ENCODE measurements at regions of chr15 and their contacts with region 1.

Region 1: GRCh38 chr15:45166834-45167630 is 20.7 kb downstream of the SHF start:
- DNase-seq: peak; percentile 51
- ATAC-seq: peak; percentile 95
- H3K4me3 ChIP-seq: peak overlapping the region; percentile 79
- H3K27ac ChIP-seq: peak overlapping the region; percentile 40
- H3K4me1 ChIP-seq: peaks cover 12% of the 10 kb centered on the region
- H3K27me3 ChIP-seq: no peaks in the 10 kb centered on the region
- CTCF ChIP-seq: peak; percentile 79 to 87 (median 83); a peak in 5 of 6 replicates
- EP300 ChIP-seq: no peak
- POLR2A ChIP-seq: peak; percentile 75
- RAD21 ChIP-seq: peak; percentile 41

Region 2: GRCh38 chr15:45126535-45127158 is 40.4 kb before region 1 on chr15:
- CTCF ChIA-PET with region 1: interaction called, 14 read pairs
- POLR2A ChIA-PET with region 1: no interaction called
- RAD21 ChIA-PET with region 1: interaction called, 4 read pairs
- SMC1A ChIA-PET with region 1: interaction called, 3 read pairs
- in situ Hi-C with region 1: no loop called
- intact Hi-C with region 1: no loop called
- DNase-seq: no peak
- ATAC-seq: peak; percentile 89
- H3K4me3 ChIP-seq: no peak overlapping the region
- H3K27ac ChIP-seq: no peak overlapping the region
- H3K4me1 ChIP-seq: no peaks in the 10 kb centered on the region
- H3K27me3 ChIP-seq: peaks cover 4 to 8% of the 10 kb centered on the region in 2 experiments
- CTCF ChIP-seq: peak; percentile 64 to 72 (median 67)
- EP300 ChIP-seq: no peak
- POLR2A ChIP-seq: no peak
- RAD21 ChIP-seq: peak; percentile 45

Region 3: GRCh38 chr15:45198337-45199135 is 31.5 kb after region 1 on chr15:
- CTCF ChIA-PET with region 1: interaction called, 253 read pairs
- POLR2A ChIA-PET with region 1: interaction called, 9 read pairs
- RAD21 ChIA-PET with region 1: interaction called, 104 read pairs
- SMC1A ChIA-PET with region 1: interaction called, 159 read pairs
- in situ Hi-C with region 1: no loop called
- intact Hi-C with region 1: loop called (anchors 1 kb)
- DNase-seq: peak; percentile 98
- ATAC-seq: peak; percentile 63
- H3K4me3 ChIP-seq: peak overlapping the region; percentile 86
- H3K27ac ChIP-seq: peak overlapping the region; percentile 95
- H3K4me1 ChIP-seq: no peaks in the 10 kb centered on the region; the same call in none of the 2 replicates
- H3K27me3 ChIP-seq: no peaks in the 10 kb centered on the region
- CTCF ChIP-seq: peak; percentile 71 to 81 (median 80)
- EP300 ChIP-seq: peak in 1 of 2 experiments; percentile 90; a peak in 1 of 4 replicates
- POLR2A ChIP-seq: peak; percentile 96
- RAD21 ChIP-seq: no peak

Region 4: GRCh38 chr15:45279024-45279698 is 112.1 kb after region 1 on chr15:
- CTCF ChIA-PET with region 1: no interaction called
- POLR2A ChIA-PET with region 1: no interaction called
- RAD21 ChIA-PET with region 1: interaction called, 5 read pairs
- SMC1A ChIA-PET with region 1: interaction called, 7 read pairs
- in situ Hi-C with region 1: loop called (anchors 5 kb)
- intact Hi-C with region 1: no loop called
- DNase-seq: peak; percentile 95
- ATAC-seq: peak; percentile 100
- H3K4me3 ChIP-seq: peak overlapping the region; percentile 95
- H3K27ac ChIP-seq: peak overlapping the region; percentile 45
- H3K4me1 ChIP-seq: peaks cover 3% of the 10 kb centered on the region
- H3K27me3 ChIP-seq: no peaks in the 10 kb centered on the region
- CTCF ChIP-seq: no peak
- EP300 ChIP-seq: no peak
- POLR2A ChIP-seq: peak; percentile 91
- RAD21 ChIP-seq: no peak

Region 5: GRCh38 chr15:45391746-45392583 is 224.9 kb after region 1 on chr15:
- CTCF ChIA-PET with region 1: interaction called, 109 read pairs
- POLR2A ChIA-PET with region 1: no interaction called
- RAD21 ChIA-PET with region 1: interaction called, 16 read pairs
- SMC1A ChIA-PET with region 1: interaction called, 11 read pairs
- in situ Hi-C with region 1: no loop called
- intact Hi-C with region 1: no loop called
- DNase-seq: peak; percentile 90
- ATAC-seq: peak; percentile 96
- H3K4me3 ChIP-seq: 0 out of 2 replicates have a peak overlapping the region, but pooled peaks have one; percentile 11
- H3K27ac ChIP-seq: peak overlapping the region; percentile 72
- H3K4me1 ChIP-seq: peaks cover 21% of the 10 kb centered on the region
- H3K27me3 ChIP-seq: no peaks in the 10 kb centered on the region
- CTCF ChIP-seq: no peak
- EP300 ChIP-seq: peak; percentile 76 to 85
- POLR2A ChIP-seq: no peak
- RAD21 ChIP-seq: no peak

Region 6: DNA sequence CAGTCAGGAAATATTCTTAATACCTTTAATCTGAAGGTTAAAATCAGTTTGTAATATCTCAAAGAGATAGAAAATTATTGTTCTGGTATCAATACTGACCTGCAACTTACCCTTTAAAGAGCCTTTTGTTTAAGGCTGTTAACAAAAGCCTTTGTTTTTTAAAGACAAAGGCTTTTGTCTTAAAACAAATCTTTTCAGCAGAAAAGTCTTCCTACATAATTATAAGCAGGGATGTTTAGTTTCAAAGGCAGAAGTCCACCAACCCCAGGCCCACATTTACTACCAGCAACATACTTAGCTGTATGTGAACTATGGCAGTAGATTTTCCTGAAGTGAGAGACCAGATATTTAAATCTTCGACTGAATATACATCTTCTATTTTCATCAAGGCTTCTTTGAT is 319.3 kb after region 1 on chr15:
- CTCF ChIA-PET with region 1: no interaction called
- POLR2A ChIA-PET with region 1: no interaction called
- RAD21 ChIA-PET with region 1: no interaction called
- SMC1A ChIA-PET with region 1: no interaction called
- in situ Hi-C with region 1: no loop called
- intact Hi-C with region 1: no loop called
- DNase-seq: no peak
- ATAC-seq: no peak
- H3K4me3 ChIP-seq: no peak overlapping the region
- H3K27ac ChIP-seq: no peak overlapping the region
- H3K4me1 ChIP-seq: no peaks in the 10 kb centered on the region
- H3K27me3 ChIP-seq: no peaks in the 10 kb centered on the region
- CTCF ChIP-seq: no peak
- EP300 ChIP-seq: no peak
- POLR2A ChIP-seq: no peak
- RAD21 ChIP-seq: no peak

Region 7: GRCh38 chr15:45611305-45611704 is 444.3 kb after region 1 on chr15:
- CTCF ChIA-PET with region 1: interaction called, 11 read pairs
- POLR2A ChIA-PET with region 1: no interaction called
- RAD21 ChIA-PET with region 1: interaction called, 4 read pairs
- SMC1A ChIA-PET with region 1: interaction called, 4 read pairs
- in situ Hi-C with region 1: no loop called
- intact Hi-C with region 1: no loop called
- DNase-seq: no peak
- ATAC-seq: peak; percentile 43; the same call in 1 of the 3 replicates
- H3K4me3 ChIP-seq: no peak overlapping the region
- H3K27ac ChIP-seq: no peak overlapping the region
- H3K4me1 ChIP-seq: no peaks in the 10 kb centered on the region; the same call in 1 of the 2 replicates
- H3K27me3 ChIP-seq: no peaks in the 10 kb centered on the region
- CTCF ChIP-seq: peak; percentile 42 to 53 (median 46); a peak in 5 of 6 replicates
- EP300 ChIP-seq: no peak
- POLR2A ChIP-seq: no peak
- RAD21 ChIP-seq: peak; percentile 61